A673 (cell line): ENCODE measurements at regions of chr22 and their contacts with region 1.

Region 1: DNA sequence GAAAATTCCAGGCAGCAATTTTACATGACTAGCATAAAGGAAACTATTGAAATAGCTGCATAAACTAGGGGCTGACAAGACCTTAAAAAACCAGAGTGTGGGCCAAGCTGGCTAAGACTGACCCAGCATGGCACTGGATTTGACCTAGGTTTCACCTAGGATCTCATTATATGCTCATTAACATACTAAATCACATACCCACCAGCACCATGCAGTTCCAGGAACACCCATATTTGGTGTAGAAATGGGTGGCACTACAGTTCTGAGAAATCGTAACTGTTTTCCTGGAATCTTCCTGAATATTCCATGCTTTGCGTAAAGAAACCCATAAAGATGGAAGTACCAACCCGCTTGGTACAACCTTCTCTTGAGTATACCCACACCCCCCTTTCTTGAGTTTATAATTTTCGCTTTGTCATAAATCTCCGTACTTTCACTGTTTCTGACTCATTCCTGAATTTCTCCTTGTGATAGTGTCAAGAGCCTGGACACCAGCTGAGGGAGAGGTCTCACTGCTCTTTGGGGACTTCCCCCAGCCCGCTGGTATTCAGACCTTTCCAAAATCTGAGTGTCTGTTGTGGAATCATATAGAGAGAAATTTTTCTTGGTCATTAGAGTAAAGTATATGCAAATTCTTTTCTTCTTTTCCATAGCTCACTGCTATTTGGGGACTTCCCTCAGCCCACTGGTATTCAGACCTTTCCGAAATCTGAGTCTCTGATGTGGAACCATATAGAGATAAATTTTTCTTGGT is 55.1 kb downstream of the MTMR3 start:
- DNase-seq: peak; percentile 52
- H3K4me3 ChIP-seq: no peak overlapping the region
- H3K27ac ChIP-seq: no peak overlapping the region
- H3K4me1 ChIP-seq: peaks cover 27% of the 10 kb centered on the region
- H3K27me3 ChIP-seq: no peaks in the 10 kb centered on the region
- CTCF ChIP-seq: no peak

Region 2: DNA sequence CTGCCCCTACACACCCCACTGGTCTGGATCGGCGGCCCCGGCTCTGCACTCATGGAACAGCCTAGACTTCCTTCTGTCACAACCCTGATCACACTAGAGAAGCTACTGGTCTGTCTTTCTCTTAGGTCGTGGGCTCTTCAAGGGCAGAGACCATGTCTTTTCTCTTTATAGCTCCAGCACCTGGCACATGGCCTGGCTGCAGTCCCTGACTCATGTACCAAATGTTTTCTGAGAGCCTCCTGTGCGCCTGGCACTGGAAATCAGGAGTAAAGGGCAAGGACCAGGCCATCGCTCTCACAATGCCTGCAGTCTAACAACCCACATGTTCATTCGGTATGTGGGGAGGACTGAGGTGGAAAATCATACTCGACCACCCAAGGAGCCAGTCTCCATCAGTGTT is 107.5 kb before region 1 on chr22:
- CTCF ChIA-PET with region 1: interaction called, 17 read pairs
- POLR2A ChIA-PET with region 1: no interaction called
- intact Hi-C with region 1: no loop called
- DNase-seq: no peak
- H3K4me3 ChIP-seq: no peak overlapping the region
- H3K27ac ChIP-seq: no peak overlapping the region
- H3K4me1 ChIP-seq: no peaks in the 10 kb centered on the region
- H3K27me3 ChIP-seq: no peaks in the 10 kb centered on the region
- CTCF ChIP-seq: no peak